Activated CD8-positive, alpha-beta T cell treated with anti-CD3 and anti-CD28 coated beads for 36 hours (primary cell): ENCODE measurements at regions of chr1 and their contacts with region 1.

Region 1: DNA sequence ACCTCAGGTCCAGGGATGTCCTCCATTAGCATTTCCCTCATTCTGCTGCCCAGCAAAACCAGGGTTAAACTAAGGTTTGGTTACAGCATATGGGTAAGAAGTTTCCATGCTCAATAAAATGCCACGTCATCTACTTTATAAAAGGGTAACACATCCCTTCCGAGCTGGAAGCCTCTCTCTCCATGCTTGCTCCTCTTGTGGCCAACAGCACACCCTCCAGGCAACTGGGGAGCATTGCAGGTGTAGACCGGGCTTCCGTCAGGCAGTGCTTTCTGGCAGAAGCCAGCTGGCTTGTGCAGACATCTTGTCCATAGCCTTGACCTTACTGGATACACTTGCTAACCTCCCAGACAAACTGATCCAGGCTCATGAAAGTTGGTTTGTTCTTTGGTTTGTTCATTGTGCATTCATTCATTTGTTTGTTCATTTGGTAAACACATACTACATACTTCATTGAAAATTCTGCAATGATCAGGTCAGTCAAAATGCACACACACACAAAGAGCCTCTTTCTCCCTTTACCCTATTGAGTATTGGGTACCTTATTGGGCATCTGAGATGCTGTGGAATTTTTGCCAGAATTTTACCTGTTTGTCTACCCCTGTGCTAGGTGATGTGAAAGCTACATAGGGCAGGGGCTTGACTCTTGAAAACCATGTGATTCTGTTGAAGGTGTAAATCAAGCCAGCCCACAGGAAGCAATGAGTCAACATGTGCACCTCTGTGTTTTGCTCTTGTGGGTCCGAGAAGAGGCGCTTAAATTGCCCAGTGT is 422.8 kb downstream of the CAMTA1 start:
- DNase-seq: peak; percentile 56
- ATAC-seq: peak; percentile 88
- H3K4me3 Mint-ChIP-seq: no peak overlapping the region
- H3K27ac Mint-ChIP-seq: no peak overlapping the region
- H3K4me1 Mint-ChIP-seq: no peaks in the 10 kb centered on the region
- H3K27me3 Mint-ChIP-seq: peaks cover 27% of the 10 kb centered on the region
- CTCF ChIP-seq: peak; percentile 52

Region 2: DNA sequence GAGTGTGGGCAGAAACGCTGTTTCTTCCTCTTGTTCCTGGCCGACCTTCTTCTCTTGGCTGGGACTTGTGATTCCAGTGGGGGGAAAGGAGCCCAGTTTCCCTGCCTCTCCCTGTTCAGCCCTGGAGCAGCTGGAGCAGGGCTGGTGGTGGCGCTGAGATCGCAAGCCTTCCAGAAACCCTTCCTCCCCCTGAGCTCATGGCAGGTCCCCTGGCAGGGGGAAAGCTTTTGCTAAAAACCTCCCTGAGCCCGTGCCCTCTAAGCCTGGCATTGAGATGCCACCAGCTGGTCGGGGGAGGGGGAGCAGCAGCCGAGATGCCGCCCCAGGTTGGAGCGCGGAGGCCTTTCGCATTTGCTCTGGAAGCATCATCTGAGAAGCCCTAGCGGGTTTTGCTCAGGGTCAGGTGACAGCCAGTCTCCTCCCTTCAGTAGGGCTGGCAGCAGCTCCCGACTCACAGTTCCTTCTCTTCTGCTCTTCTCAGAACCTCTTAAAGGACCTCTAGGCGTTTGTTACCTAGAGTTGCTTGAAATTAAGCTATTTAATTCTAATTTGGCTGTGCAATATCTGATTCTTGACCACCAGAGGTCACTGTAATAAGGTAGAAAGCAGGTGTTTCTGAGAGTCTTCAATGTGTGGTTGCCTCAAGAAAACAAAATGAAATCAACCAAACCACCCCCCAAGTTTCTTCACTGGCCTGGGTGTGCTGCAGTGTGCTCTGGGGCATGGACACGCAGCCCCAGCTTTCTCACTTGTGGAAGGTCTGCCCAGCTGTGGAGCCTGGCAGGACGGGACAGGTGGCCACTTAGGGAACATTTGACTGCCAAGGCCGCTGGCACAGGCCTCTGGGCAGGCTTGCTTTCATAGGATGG is 165.5 kb before region 1 on chr1:
- CTCF ChIA-PET with region 1: interaction called, 17 read pairs
- POLR2A ChIA-PET with region 1: no interaction called
- intact Hi-C with region 1: no loop called
- DNase-seq: no peak
- ATAC-seq: no peak
- H3K4me3 Mint-ChIP-seq: no peak overlapping the region
- H3K27ac Mint-ChIP-seq: no peak overlapping the region
- H3K4me1 Mint-ChIP-seq: no peaks in the 10 kb centered on the region
- H3K27me3 Mint-ChIP-seq: peaks cover 5% of the 10 kb centered on the region
- CTCF ChIP-seq: peak; percentile 52